ENCODE measurements at regions of chr12 and their contacts with region 1.

Region 1: DNA sequence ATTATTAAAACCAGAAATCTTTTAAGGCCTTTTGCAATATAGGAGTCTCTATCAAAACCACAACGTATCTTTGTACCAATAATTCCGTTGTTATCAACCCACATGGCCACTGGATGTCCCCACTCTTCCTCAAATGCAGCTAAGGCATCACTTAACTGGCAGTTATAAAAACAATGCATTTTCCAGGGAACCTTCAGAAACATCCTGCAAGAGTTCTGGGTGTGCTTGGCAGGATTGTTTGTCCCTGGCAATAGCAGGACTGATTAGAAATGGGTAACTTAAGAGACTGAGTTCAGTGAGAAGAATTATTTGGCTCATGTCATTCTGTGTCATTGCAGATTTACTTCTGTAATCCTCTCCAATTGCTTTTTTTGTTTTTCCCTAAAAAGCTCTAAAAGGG is 112.0 kb downstream of the SLC15A5 start:
- DNase-seq: peak in 1 of 2 experiments; percentile 53
- H3K4me3 ChIP-seq: no peak overlapping the region
- H3K27ac ChIP-seq: no peak overlapping the region
- H3K4me1 ChIP-seq: no peaks in the 10 kb centered on the region
- H3K27me3 ChIP-seq: no peaks in the 10 kb centered on the region
- CTCF ChIP-seq: peak; percentile 80

Region 2: GRCh38 chr12:16030729-16031128 is 134.8 kb before region 1 on chr12:
- CTCF ChIA-PET with region 1: no interaction called
- POLR2A ChIA-PET with region 1: no interaction called
- intact Hi-C with region 1: no loop called
- DNase-seq: no peak
- H3K4me3 ChIP-seq: no peak overlapping the region
- H3K27ac ChIP-seq: no peak overlapping the region
- H3K4me1 ChIP-seq: no peaks in the 10 kb centered on the region
- H3K27me3 ChIP-seq: no peaks in the 10 kb centered on the region
- CTCF ChIP-seq: no peak

Region 3: DNA sequence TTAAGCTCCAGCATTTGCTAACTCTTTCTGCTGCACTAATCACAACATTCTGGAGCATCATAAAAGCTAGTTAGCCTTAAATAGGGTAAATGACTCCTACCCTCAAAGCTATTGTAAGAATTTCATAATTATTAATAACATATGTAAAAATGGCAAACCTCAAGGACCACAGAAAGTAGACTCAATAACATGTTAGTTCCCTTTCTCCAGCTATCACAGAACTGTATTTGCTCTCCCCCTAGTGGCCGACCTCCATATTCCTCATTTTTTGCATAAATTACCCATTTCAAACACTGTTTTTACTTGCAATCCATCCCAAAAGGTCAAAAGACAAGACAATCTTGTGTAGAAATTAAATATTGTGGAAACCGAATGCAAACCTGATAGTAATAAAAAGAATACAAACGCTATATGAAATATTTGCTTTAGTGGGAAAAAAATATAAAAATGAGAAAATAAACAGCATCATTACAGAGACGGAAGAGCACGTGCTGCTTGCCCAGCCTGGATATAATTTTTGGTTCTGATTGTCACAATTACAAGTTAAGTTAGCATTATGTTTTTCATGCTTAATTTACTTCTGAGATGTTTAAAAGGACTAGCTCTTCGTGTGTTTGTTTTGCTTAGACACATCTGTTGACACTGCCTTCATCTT is 1826.6 kb after region 1 on chr12:
- CTCF ChIA-PET with region 1: no interaction called
- POLR2A ChIA-PET with region 1: no interaction called
- intact Hi-C with region 1: loop called (anchors 2 kb)
- DNase-seq: peak in 1 of 2 experiments; percentile 39
- H3K4me3 ChIP-seq: no peak overlapping the region
- H3K27ac ChIP-seq: no peak overlapping the region
- H3K4me1 ChIP-seq: no peaks in the 10 kb centered on the region
- H3K27me3 ChIP-seq: no peaks in the 10 kb centered on the region
- CTCF ChIP-seq: peak; percentile 87

Measured in PC-9 (cell line).